Mammary epithelial cell (primary cell): ENCODE measurements at regions of chr11 and their contacts with region 1.

Region 1: DNA sequence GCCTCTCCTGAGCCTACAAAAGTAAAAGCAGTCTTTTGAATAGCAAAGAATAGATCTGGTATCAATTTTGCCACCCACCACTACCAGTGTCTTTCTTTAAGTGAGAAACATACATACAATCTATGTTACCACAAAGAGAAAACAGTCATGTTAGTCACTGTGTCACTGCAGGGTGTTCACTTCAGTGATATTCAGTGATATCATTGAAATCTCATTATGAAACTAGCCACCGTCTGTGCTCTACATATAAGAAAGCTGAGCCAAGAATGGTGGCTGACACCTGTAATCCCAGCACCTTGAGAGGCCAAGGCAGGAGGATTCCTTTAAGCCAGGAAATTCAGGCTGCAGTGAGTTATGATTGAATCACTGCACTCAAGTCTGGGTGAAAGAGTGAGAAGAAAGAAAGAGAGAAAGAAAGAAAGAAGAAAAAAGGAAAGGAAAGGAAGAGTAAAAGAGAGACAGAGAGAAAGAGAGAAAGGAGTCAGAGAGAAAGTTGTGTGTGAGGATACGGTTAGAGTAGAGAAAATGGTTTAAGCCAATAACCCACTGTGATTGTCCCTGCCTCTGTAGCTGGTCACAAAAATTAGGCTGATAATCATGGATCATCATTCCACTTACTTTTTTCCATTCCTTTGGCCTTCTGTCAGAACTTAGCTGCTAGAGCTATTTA is 847.1 kb downstream of the FAM181B start:
- DNase-seq: no peak
- H3K4me3 ChIP-seq: no peak overlapping the region
- H3K27ac ChIP-seq: no peak overlapping the region
- H3K4me1 ChIP-seq: peaks cover 4% of the 10 kb centered on the region
- H3K27me3 ChIP-seq: no peaks in the 10 kb centered on the region
- CTCF ChIP-seq: no peak

Region 2: GRCh38 chr11:81869351-81870065 is 17.0 kb before region 1 on chr11:
- CTCF ChIA-PET with region 1: interaction called, 11 read pairs
- dilution Hi-C with region 1: no loop called
- in situ Hi-C with region 1: no loop called
- intact Hi-C with region 1: no loop called
- DNase-seq: peak; percentile 82
- H3K4me3 ChIP-seq: no peak overlapping the region
- H3K27ac ChIP-seq: no peak overlapping the region
- H3K4me1 ChIP-seq: peaks cover 25% of the 10 kb centered on the region
- H3K27me3 ChIP-seq: no peaks in the 10 kb centered on the region
- CTCF ChIP-seq: no peak

Region 3: DNA sequence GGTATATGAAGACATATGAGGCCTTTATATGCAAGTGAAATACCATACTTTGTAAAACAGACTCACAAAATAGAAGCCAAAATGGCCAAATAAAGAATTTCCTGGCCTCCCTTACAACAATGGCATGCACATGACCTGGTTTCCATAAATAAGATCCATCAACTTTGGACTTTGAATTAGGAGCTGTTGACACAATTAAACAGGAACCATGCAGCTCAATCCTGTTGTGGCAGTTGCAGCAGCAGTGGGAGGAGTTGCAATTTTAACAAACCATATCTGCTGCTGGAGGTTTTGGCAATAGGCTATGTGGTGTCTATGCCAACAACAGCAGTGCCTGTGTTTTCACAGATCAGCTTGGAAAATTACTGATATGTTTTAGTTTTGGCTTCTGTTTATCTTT is 28.5 kb after region 1 on chr11:
- CTCF ChIA-PET with region 1: no interaction called
- dilution Hi-C with region 1: no loop called
- in situ Hi-C with region 1: no loop called
- intact Hi-C with region 1: no loop called
- DNase-seq: no peak
- H3K4me3 ChIP-seq: no peak overlapping the region
- H3K27ac ChIP-seq: no peak overlapping the region
- H3K4me1 ChIP-seq: no peaks in the 10 kb centered on the region
- H3K27me3 ChIP-seq: no peaks in the 10 kb centered on the region
- CTCF ChIP-seq: no peak